B cell (primary cell): ENCODE measurements at regions of chr2 and their contacts with region 1.

Region 1: GRCh38 chr2:68467077-68467960 is at the starts of genes APLF and FBXO48:
- DNase-seq: peak; percentile 98
- ATAC-seq: peak; percentile 91
- H3K4me3 ChIP-seq: peak within 1 kb of the TSS; percentile 72 to 98 (median 90)
- H3K4me3 Mint-ChIP-seq: peak within 1 kb of the TSS; percentile 97
- H3K27ac ChIP-seq: peak within 1 kb of the TSS; percentile 85 to 97
- H3K27ac Mint-ChIP-seq: peak within 1 kb of the TSS; percentile 96
- H3K4me1 ChIP-seq: peaks cover 11 to 15% of the 10 kb centered on the region in 2 donors
- H3K4me1 Mint-ChIP-seq: peaks cover 28% of the 10 kb centered on the region
- H3K27me3 ChIP-seq: no peaks in the 10 kb centered on the region
- H3K27me3 Mint-ChIP-seq: no peaks in the 10 kb centered on the region
- CTCF ChIP-seq: no peak
- total RNA-seq, gene APLF: 6.3 and 7.4 TPM in 2 replicates
- total RNA-seq, gene FBXO48: 3.2 TPM in 2 replicates

Region 2: DNA sequence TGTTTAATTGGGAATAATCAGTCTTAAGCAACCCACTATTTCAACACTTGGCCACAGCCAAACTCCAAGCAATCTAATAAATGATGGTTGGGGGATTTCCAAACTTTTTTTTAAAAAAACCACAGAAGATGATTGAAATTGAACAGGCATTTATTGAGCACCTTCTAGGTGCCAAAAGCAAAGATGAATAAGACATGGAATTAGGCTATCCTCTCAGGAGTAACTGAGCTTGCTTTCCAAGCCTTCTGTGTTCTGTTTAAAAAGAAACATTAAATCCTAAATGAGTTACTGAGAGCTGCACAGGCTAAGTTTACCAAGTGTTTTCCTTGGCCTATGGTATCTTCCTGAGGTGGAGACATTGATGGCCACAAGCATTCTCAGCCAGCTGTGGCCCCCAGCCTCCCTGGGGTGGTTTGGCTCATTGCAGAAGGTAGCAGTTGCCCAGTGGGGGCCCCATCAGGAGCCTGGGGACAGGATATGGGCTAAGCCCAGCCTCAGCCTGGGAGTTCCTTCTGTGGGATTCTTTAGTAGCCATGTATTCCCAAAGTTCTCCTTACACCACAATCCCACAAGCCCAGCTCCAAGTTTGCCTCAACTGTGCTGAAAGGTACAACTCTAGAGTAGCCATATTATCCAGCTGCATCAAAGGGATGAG is 578.8 kb before region 1 on chr2:
- CTCF ChIA-PET with region 1: no interaction called
- POLR2A ChIA-PET with region 1: no interaction called
- intact Hi-C with region 1: no loop called
- DNase-seq: no peak
- ATAC-seq: no peak
- H3K4me3 ChIP-seq: no peak overlapping the region
- H3K4me3 Mint-ChIP-seq: no peak overlapping the region
- H3K27ac ChIP-seq: no peak overlapping the region
- H3K27ac Mint-ChIP-seq: no peak overlapping the region
- H3K4me1 ChIP-seq: no peaks in the 10 kb centered on the region
- H3K4me1 Mint-ChIP-seq: no peaks in the 10 kb centered on the region
- H3K27me3 ChIP-seq: no peaks in the 10 kb centered on the region
- H3K27me3 Mint-ChIP-seq: peaks cover 9% of the 10 kb centered on the region
- CTCF ChIP-seq: no peak

Region 3: GRCh38 chr2:68487773-68488355 is 20.5 kb after region 1 on chr2:
- CTCF ChIA-PET with region 1: interaction called, 46 read pairs
- POLR2A ChIA-PET with region 1: no interaction called
- intact Hi-C with region 1: loop called (anchors 2 kb)
- DNase-seq: peak; percentile 50
- ATAC-seq: no peak
- H3K4me3 ChIP-seq: no peak overlapping the region
- H3K4me3 Mint-ChIP-seq: no peak overlapping the region
- H3K27ac ChIP-seq: no peak overlapping the region
- H3K27ac Mint-ChIP-seq: no peak overlapping the region
- H3K4me1 ChIP-seq: peaks cover 0 to 2% of the 10 kb centered on the region in 2 donors
- H3K4me1 Mint-ChIP-seq: peaks cover 4% of the 10 kb centered on the region
- H3K27me3 ChIP-seq: no peaks in the 10 kb centered on the region
- H3K27me3 Mint-ChIP-seq: no peaks in the 10 kb centered on the region
- CTCF ChIP-seq: peak; percentile 76

Region 4: GRCh38 chr2:68715353-68716041 is 248.2 kb after region 1 on chr2:
- CTCF ChIA-PET with region 1: interaction called, 57 read pairs
- POLR2A ChIA-PET with region 1: interaction called, 6 read pairs
- intact Hi-C with region 1: loop called (anchors 5 kb)
- DNase-seq: peak; percentile 70
- ATAC-seq: peak; percentile 37
- H3K4me3 ChIP-seq: peak overlapping the region in 1 of 5 experiments; percentile 17
- H3K4me3 Mint-ChIP-seq: peak overlapping the region; percentile 33
- H3K27ac ChIP-seq: peak overlapping the region; percentile 59 to 78
- H3K27ac Mint-ChIP-seq: peak overlapping the region; percentile 83
- H3K4me1 ChIP-seq: peaks cover 45 to 50% of the 10 kb centered on the region in 2 donors
- H3K4me1 Mint-ChIP-seq: peaks cover 69% of the 10 kb centered on the region
- H3K27me3 ChIP-seq: no peaks in the 10 kb centered on the region
- H3K27me3 Mint-ChIP-seq: no peaks in the 10 kb centered on the region
- CTCF ChIP-seq: peak; percentile 57

Region 5: GRCh38 chr2:68766376-68766845 is 299.1 kb after region 1 on chr2:
- CTCF ChIA-PET with region 1: interaction called, 3 read pairs
- POLR2A ChIA-PET with region 1: no interaction called
- intact Hi-C with region 1: loop called (anchors 5 kb)
- DNase-seq: peak; percentile 74
- ATAC-seq: peak; percentile 44
- H3K4me3 ChIP-seq: peak overlapping the region in 3 of 5 experiments; percentile 9 to 48 (median 16)
- H3K4me3 Mint-ChIP-seq: peak overlapping the region; percentile 80
- H3K27ac ChIP-seq: peak overlapping the region; percentile 93 to 99
- H3K27ac Mint-ChIP-seq: peak overlapping the region; percentile 98
- H3K4me1 ChIP-seq: peaks cover 97 to 100% of the 10 kb centered on the region in 2 donors
- H3K4me1 Mint-ChIP-seq: peaks cover 94% of the 10 kb centered on the region
- H3K27me3 ChIP-seq: no peaks in the 10 kb centered on the region
- H3K27me3 Mint-ChIP-seq: no peaks in the 10 kb centered on the region
- CTCF ChIP-seq: no peak

Region 6: DNA sequence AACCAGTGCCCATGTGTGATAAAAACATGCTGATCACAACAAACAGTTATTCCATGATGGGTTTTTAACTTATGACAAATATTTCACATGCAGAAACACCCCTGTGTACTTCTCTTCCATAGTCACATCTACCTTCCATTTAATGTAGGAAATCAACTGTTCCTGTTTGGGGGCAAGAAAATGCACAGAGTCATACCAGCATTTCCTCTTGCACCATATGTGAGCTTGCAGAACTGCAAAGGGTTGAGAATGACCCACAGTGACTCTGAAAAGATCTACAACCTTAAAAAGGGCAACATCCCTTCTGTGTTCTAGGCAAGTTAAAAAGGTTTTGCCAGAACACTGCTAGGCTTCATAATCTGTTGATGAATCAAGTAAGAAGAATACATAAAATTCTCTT is 394.0 kb after region 1 on chr2:
- CTCF ChIA-PET with region 1: no interaction called
- POLR2A ChIA-PET with region 1: no interaction called
- intact Hi-C with region 1: no loop called
- DNase-seq: no peak
- ATAC-seq: no peak
- H3K4me3 ChIP-seq: no peak overlapping the region
- H3K4me3 Mint-ChIP-seq: no peak overlapping the region
- H3K27ac ChIP-seq: no peak overlapping the region
- H3K27ac Mint-ChIP-seq: no peak overlapping the region
- H3K4me1 ChIP-seq: peaks cover 12% of the 10 kb centered on the region in 2 donors
- H3K4me1 Mint-ChIP-seq: peaks cover 17% of the 10 kb centered on the region
- H3K27me3 ChIP-seq: no peaks in the 10 kb centered on the region
- H3K27me3 Mint-ChIP-seq: no peaks in the 10 kb centered on the region
- CTCF ChIP-seq: no peak

Region 7: DNA sequence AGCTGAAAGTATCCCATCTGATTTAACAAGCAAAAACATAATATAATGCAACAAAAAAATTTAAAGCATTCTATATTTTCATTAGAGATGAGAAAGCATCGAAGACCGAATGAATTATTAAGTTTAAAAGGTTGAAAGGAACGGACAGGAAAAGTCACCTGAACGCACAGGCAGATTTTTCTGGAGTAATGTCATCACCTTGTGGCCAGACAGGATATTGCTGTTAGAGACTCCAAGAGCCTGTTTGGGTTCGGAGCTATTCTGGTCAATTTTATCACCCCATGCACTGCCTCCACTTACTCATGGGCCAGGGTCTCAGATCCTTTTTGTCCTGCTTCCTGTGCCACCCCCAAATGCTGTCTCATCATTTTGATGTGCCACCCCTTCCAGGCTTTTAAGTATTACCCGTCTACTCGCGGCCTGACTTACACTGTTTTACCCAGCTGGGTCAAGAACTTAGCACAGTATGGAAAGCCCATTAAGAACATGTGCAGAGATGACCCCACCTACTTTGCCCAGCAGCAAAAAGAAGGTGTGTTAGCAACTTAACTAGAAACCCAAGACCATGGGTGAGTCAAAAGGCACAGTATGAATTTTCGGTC is 458.1 kb after region 1 on chr2:
- CTCF ChIA-PET with region 1: interaction called, 173 read pairs
- POLR2A ChIA-PET with region 1: no interaction called
- intact Hi-C with region 1: loop called (anchors 1 kb)
- DNase-seq: peak; percentile 76
- ATAC-seq: peak; percentile 56
- H3K4me3 ChIP-seq: no peak overlapping the region
- H3K4me3 Mint-ChIP-seq: no peak overlapping the region
- H3K27ac ChIP-seq: no peak overlapping the region
- H3K27ac Mint-ChIP-seq: no peak overlapping the region
- H3K4me1 ChIP-seq: no peaks in the 10 kb centered on the region
- H3K4me1 Mint-ChIP-seq: no peaks in the 10 kb centered on the region
- H3K27me3 ChIP-seq: no peaks in the 10 kb centered on the region
- H3K27me3 Mint-ChIP-seq: peaks cover 4% of the 10 kb centered on the region
- CTCF ChIP-seq: peak; percentile 95

Region 8: DNA sequence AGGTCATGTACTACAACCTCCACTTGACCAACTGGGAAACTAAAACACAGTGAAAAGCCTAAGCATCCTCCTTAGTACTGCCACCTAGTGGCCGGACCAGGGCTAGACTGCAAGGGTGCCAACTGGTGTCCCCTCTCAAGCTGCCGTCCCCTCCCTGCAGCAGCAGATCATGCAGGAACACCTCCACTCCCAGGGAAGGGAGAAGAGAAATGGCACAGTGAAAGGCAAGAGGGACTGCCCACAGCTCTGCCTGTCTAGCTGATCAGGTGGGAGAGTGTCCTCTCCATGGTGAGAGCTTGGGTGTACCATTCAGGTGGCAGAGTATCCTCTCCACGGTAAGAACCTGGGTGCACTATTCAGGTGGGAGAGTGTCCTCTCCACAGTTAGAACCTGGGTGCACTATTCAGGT is 1098.1 kb after region 1 on chr2:
- CTCF ChIA-PET with region 1: interaction called, 15 read pairs
- POLR2A ChIA-PET with region 1: no interaction called
- intact Hi-C with region 1: no loop called
- DNase-seq: peak; percentile 74
- ATAC-seq: peak; percentile 79
- H3K4me3 ChIP-seq: no peak overlapping the region
- H3K4me3 Mint-ChIP-seq: no peak overlapping the region
- H3K27ac ChIP-seq: no peak overlapping the region
- H3K27ac Mint-ChIP-seq: no peak overlapping the region
- H3K4me1 ChIP-seq: peaks cover 0 to 3% of the 10 kb centered on the region in 2 donors
- H3K4me1 Mint-ChIP-seq: no peaks in the 10 kb centered on the region
- H3K27me3 ChIP-seq: peaks cover 0 to 6% (median 4%) of the 10 kb centered on the region in 4 experiments
- H3K27me3 Mint-ChIP-seq: peaks cover 20% of the 10 kb centered on the region
- CTCF ChIP-seq: peak; percentile 84